Endothelial cell of umbilical vein (primary cell): ENCODE measurements at regions of chr10 and their contacts with region 1.

Region 1: GRCh38 chr10:68082872-68083271 is 7.8 kb upstream of the HERC4 start:
- DNase-seq: peak; percentile 52
- H3K4me3 ChIP-seq: no peak overlapping the region
- H3K27ac ChIP-seq: no peak overlapping the region
- H3K4me1 ChIP-seq: peaks cover 6% of the 10 kb centered on the region
- H3K27me3 ChIP-seq: no peaks in the 10 kb centered on the region
- CTCF ChIP-seq: peak in 1 of 2 donors; percentile 22
- POLR2A ChIP-seq: no peak

Region 2: GRCh38 chr10:68096913-68097503 is 14.1 kb after region 1 on chr10:
- CTCF ChIA-PET with region 1: interaction called, 12 read pairs
- POLR2A ChIA-PET with region 1: no interaction called
- dilution Hi-C with region 1: no loop called
- intact Hi-C with region 1: no loop called
- DNase-seq: peak; percentile 89
- H3K4me3 ChIP-seq: no peak overlapping the region
- H3K27ac ChIP-seq: peak overlapping the region; percentile 42
- H3K4me1 ChIP-seq: peaks cover 27% of the 10 kb centered on the region
- H3K27me3 ChIP-seq: no peaks in the 10 kb centered on the region
- CTCF ChIP-seq: no peak
- POLR2A ChIP-seq: no peak

Region 3: DNA sequence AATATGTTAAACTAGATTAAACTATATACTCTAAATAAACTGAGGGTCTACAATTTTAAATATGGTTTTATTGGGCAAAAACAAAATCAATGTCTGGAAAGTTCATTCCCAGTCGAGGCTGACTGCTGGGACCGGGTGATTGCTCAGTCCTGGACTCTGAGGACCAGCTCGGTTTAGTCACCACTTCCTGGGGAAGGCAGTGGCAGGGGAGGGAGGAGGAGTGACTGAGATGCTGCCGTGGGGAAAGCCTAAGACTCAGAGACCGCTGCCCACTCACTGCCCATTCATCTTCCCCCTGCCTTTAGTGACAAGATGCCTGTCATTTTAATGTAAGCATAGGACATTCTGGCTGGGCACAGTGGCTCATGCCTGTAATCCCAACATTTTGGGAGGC is 120.1 kb after region 1 on chr10:
- CTCF ChIA-PET with region 1: interaction called, 20 read pairs
- POLR2A ChIA-PET with region 1: no interaction called
- dilution Hi-C with region 1: no loop called
- intact Hi-C with region 1: loop called (anchors 1 kb)
- DNase-seq: peak; percentile 57
- H3K4me3 ChIP-seq: no peak overlapping the region
- H3K27ac ChIP-seq: no peak overlapping the region
- H3K4me1 ChIP-seq: peaks cover 4% of the 10 kb centered on the region
- H3K27me3 ChIP-seq: no peaks in the 10 kb centered on the region
- CTCF ChIP-seq: no peak
- POLR2A ChIP-seq: no peak